Activated T-helper 1 cell treated with anti-CD3 and anti-CD28 coated beads, Interleukin-12 subunit alpha, Interleukin-12 subunit beta, Interleukin-2, Interleukin-4 antibody, amounts not matched to agents 30 ng/mL and 10 ng/mL and 1 ng/mL, durations not matched to agents 14 hours and 24 hours and 36 hours (primary cell): ENCODE measurements at regions of chr11 and their contacts with region 1.

Region 1: GRCh38 chr11:34357701-34358257 is at the start of gene ABTB2:
- DNase-seq: peak; percentile 98
- H3K4me3 Mint-ChIP-seq: peak within 1 kb of the TSS; percentile 88
- H3K27ac Mint-ChIP-seq: peak within 1 kb of the TSS; percentile 77
- H3K4me1 Mint-ChIP-seq: peaks cover 39% of the 10 kb centered on the region
- H3K27me3 Mint-ChIP-seq: peaks cover 22% of the 10 kb centered on the region
- total RNA-seq, gene ABTB2: 14.1 and 14.5 TPM in 2 replicates

Region 2: GRCh38 chr11:33835143-33835878 is 522.5 kb before region 1 on chr11:
- intact Hi-C with region 1: loop called (anchors 2 kb)
- DNase-seq: no peak
- H3K4me3 Mint-ChIP-seq: no peak overlapping the region
- H3K27ac Mint-ChIP-seq: no peak overlapping the region
- H3K4me1 Mint-ChIP-seq: no peaks in the 10 kb centered on the region
- H3K27me3 Mint-ChIP-seq: peaks cover 31% of the 10 kb centered on the region

Region 3: DNA sequence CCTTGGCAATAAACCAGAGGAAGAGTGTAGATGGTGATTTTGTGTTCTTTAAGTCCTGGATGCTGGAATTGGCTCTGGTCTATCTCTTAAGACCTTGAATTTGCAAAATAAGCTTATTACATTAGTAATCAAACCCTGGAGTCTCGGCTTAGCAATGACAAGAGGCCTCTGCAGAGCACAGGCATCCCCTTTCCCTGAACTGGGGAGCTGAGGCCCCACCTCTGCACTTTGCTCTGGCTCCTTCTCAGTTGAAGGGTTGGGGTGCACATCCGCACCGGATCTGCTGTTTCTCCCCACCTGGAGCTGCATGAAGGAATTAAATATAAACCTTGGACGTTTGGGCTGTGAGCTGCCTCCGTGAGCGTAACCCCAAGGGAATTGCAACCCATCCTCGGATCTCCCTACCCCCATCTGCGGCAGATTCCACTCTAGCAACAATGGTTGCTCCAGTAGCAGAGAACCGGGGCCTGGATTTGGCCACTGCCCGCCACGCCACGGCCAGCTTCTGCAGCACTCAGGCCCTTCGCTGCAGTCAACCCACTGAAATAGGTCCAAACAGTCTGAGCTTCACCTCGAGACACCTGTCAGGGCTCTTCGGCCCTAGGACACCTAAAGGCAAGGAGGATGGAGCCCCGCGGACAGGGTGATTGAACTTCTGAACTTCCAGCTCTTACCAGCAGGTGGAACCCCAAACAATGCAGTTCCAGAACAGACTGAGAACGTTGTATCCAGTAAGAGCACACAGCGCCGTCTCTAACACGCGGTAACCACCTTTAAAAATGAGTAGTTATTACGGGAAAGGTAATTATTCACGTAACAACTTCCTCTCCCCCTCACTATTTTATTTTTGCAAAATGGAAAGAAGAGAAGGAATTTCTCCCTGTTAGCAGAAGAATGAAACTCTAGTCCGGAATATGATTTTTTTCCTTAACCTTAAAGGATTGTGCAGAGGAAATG is 361.0 kb before region 1 on chr11:
- intact Hi-C with region 1: loop called (anchors 1 kb)
- DNase-seq: peak; percentile 67
- H3K4me3 Mint-ChIP-seq: peak overlapping the region; percentile 8
- H3K27ac Mint-ChIP-seq: no peak overlapping the region
- H3K4me1 Mint-ChIP-seq: peaks cover 12% of the 10 kb centered on the region
- H3K27me3 Mint-ChIP-seq: peaks cover 46% of the 10 kb centered on the region

Region 4: GRCh38 chr11:34174412-34175041 is 183.3 kb before region 1 on chr11:
- intact Hi-C with region 1: loop called (anchors 1 kb)
- DNase-seq: peak; percentile 71
- H3K4me3 Mint-ChIP-seq: peak overlapping the region; percentile 73
- H3K27ac Mint-ChIP-seq: no peak overlapping the region
- H3K4me1 Mint-ChIP-seq: peaks cover 22% of the 10 kb centered on the region
- H3K27me3 Mint-ChIP-seq: peaks cover 2% of the 10 kb centered on the region

Region 5: DNA sequence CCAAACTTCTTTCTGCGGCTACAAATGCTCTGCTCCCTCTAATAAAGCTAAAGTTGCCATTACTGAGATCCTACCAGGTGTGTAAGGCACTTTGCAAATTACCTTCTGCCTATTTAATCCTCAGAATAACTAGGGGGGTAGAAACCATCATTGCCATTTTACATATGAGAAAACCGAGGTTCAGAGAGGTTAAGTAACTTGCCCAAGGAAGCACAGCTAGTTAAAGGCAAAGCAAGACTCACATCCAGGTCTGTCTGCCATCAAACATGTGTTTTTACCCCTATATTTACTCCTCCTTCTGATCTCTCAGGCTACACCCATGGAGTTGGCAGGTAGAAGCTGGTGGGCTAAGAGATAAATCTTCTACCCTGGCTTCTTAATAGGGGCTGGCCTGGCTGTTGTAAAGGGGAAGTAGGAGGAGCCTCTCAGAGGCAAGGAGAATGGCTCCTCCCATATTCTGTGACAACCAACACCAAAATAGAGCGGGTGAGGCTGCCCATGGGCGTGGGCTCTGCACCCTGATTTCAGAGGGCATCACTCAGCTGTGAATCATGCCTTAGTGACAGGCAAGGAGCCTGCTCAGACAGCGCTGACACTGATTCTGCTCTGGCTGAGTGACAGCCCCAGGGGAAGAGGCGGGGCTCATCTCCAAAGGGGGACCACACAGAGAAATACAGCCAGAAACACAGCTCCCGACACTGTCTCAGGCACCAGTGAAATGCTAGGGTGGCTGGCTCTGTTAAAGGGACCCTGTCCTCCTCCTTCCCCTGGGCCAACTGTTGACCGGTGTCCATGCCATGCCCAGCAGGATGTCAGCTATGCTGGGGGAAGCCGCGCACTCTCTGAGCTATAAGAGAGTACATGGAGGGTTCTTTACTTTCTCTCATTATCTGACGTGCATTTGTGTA is 106.8 kb before region 1 on chr11:
- intact Hi-C with region 1: loop called (anchors 1 kb)
- DNase-seq: peak; percentile 38
- H3K4me3 Mint-ChIP-seq: peak overlapping the region; percentile 52
- H3K27ac Mint-ChIP-seq: peak overlapping the region; percentile 6
- H3K4me1 Mint-ChIP-seq: peaks cover 63% of the 10 kb centered on the region
- H3K27me3 Mint-ChIP-seq: peaks cover 13% of the 10 kb centered on the region

Region 6: GRCh38 chr11:34468209-34468841 is 110.5 kb after region 1 on chr11:
- intact Hi-C with region 1: loop called (anchors 2 kb)
- DNase-seq: peak; percentile 22
- H3K4me3 Mint-ChIP-seq: no peak overlapping the region
- H3K27ac Mint-ChIP-seq: no peak overlapping the region
- H3K4me1 Mint-ChIP-seq: peaks cover 6% of the 10 kb centered on the region
- H3K27me3 Mint-ChIP-seq: no peaks in the 10 kb centered on the region